ENCODE measurements at regions of chr20 and their contacts with region 1.

Region 1: DNA sequence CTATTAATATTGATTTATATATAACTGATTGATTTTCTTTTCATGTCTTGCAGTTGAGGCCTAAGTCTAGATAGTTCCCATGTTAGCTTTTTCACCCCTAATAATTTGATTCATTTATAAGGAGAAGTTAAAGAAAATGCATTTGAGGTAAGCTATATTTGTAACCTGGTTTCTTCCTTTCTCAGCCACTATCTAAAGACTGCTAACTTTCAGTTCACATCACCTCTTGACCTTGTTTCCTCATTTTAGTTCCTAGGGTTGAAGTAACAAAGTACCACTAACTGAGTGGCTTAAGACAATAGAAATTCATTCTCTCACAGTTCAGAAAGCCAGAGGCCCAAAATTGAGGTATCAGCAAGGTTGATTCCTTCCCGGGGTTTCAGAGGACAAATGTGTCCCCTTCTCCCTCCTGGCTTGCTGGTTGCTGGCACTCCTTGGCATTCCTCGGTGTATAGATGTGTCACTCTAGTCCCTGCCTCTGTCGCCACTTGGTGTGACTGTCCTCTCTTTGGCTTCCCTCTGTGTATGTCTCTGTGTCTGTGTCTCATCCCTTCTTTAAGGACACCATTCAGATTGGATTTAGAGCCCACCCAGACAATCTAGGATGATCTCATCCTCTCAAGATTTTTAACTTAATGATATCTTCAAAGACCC is 55.9 kb upstream of the C20orf144 start:
- DNase-seq: no peak
- H3K27ac ChIP-seq: no peak overlapping the region
- CTCF ChIP-seq: no peak

Region 2: DNA sequence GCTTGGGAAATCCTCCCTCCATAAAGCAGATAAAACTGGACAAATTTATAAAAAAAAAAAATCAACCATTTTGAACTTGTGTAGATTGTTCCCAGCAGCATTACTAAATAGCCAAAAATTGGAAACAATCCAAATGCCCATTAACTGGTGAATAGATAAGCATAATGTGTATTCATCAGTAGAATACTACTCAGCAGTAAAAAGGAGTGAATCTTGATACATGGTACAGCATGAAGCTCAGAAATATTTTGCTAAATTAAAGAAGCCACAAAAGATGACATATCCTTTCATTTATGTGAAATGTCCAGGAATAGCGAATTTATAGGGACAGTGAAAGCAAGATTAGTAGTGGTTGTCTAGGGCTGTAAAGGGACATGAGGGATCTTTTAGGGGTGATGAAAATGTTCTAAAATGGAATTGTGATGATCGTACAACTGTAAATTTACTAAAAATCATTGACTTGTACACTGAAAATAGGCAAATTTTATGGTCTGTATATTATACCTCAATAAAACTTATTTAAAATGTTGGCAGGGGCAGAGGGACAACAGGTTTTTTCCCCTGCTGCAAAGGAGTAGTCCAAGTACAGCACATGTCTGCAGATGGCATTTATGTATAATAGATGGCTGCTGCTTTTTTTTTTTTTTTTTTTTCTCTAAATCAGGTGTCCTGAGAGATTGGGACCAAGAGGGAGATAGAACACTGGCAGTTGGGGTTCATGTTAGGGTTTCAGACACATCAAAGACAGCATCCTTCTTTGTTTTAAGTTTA is 56.8 kb before region 1 on chr20:
- CTCF ChIA-PET with region 1: interaction called, 10 read pairs
- POLR2A ChIA-PET with region 1: no interaction called
- DNase-seq: no peak
- H3K27ac ChIP-seq: no peak overlapping the region
- CTCF ChIP-seq: no peak